GM12878 (cell line): ENCODE measurements at regions of chr5 and their contacts with region 1.

Region 1: GRCh38 chr5:158888206-158888605 is 211.5 kb downstream of the EBF1 start:
- DNase-seq: no peak
- ATAC-seq: no peak
- H3K4me3 ChIP-seq: no peak overlapping the region
- H3K27ac ChIP-seq: no peak overlapping the region
- H3K4me1 ChIP-seq: peaks cover 11% of the 10 kb centered on the region
- H3K27me3 ChIP-seq: no peaks in the 10 kb centered on the region
- CTCF ChIP-seq: no peak
- EP300 ChIP-seq: no peak
- POLR2A ChIP-seq: no peak
- RAD21 ChIP-seq: no peak

Region 2: GRCh38 chr5:158898185-158899177 is 10.3 kb after region 1 on chr5:
- CTCF ChIA-PET with region 1: interaction called, 4 read pairs
- POLR2A ChIA-PET with region 1: interaction called, 7 read pairs
- RAD21 ChIA-PET with region 1: interaction called, 40 read pairs
- SMC1A ChIA-PET with region 1: interaction called, 131 read pairs
- in situ Hi-C with region 1: no loop called
- intact Hi-C with region 1: no loop called
- DNase-seq: no peak
- ATAC-seq: peak; percentile 82
- H3K4me3 ChIP-seq: 0 out of 2 replicates have a peak overlapping the region, but pooled peaks have one; percentile 15
- H3K27ac ChIP-seq: peak overlapping the region; percentile 83
- H3K4me1 ChIP-seq: peaks cover 14% of the 10 kb centered on the region
- H3K27me3 ChIP-seq: no peaks in the 10 kb centered on the region
- CTCF ChIP-seq: no peak
- EP300 ChIP-seq: peak; percentile 70 to 74; a peak in 3 of 4 replicates
- POLR2A ChIP-seq: no peak
- RAD21 ChIP-seq: no peak